ENCODE measurements at regions of chr12 and their contacts with region 1.

Region 1: DNA sequence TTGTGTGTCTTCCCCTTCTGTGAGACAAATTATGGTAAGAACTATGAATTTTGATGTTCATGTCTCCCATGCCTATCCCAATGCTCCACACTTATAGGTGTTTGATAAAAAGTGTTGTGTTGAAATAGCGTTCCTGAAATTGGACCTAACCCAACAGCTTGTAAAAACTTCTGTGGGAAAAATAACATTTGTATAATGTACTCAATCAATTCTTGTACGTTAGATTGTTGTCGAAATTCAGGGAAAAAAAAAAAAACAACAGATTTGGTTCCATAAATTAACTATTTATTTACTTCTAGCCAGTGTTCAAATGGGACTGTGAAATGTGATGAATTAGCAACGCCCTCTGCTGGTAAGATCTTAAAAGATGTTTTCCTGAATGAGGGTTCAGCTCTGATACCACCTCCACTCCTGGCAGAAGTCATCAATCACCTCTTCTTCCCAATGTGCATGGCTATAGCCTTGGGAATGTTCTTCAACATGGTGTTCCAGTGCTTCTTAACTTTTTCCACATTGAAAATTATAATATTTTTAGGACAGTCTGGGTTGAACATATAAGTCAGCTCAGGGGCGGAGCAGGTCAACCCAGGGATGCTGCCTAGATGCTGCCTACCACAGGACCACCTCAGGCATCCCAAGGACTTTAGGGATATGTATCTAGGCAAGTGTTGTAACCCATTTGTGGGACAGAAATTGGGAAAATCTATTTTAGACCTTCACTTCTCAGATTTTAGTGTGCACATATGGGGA is 170.6 kb downstream of the OTOGL start:
- DNase-seq: no peak
- ATAC-seq: peak; percentile 86
- H3K4me3 ChIP-seq: no peak overlapping the region
- H3K27ac ChIP-seq: no peak overlapping the region
- H3K4me1 ChIP-seq: no peaks in the 10 kb centered on the region
- H3K27me3 ChIP-seq: no peaks in the 10 kb centered on the region; a peak in 1 of 4 replicates
- CTCF ChIP-seq: peak; percentile 46 to 69 (median 63); a peak in 5 of 6 replicates
- EP300 ChIP-seq: no peak
- POLR2A ChIP-seq: no peak
- RAD21 ChIP-seq: peak; percentile 65

Region 2: DNA sequence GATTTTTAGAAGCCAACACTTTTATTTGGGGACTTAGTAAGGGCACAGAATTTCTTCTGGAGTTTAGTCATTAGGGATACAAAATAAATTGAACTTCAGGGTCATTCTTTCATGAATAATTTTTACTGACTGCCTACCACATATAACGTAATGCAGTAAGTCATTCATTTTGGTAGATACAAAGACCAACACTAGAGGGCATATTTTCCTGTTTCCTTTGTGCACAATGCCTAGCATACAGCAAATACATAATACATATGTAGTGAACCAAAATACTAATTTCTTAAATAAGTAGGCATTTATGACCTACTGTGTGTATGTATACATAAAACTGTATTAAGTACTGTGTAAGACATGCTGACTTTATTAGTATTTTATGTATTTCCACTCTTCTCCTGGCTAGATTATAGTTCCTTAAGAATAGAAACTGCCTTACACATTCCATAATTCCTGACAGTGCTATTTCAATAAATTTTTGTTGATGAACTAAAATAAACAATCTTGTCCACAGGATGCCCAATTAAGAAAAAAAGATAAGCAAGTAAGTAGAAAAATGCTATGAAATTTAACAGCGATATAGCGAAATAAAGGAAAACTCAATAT is 383.0 kb before region 1 on chr12:
- CTCF ChIA-PET with region 1: interaction called, 6 read pairs
- POLR2A ChIA-PET with region 1: no interaction called
- RAD21 ChIA-PET with region 1: no interaction called
- SMC1A ChIA-PET with region 1: no interaction called
- in situ Hi-C with region 1: no loop called
- intact Hi-C with region 1: loop called (anchors 2 kb)
- DNase-seq: peak; percentile 23
- ATAC-seq: peak; percentile 94
- H3K4me3 ChIP-seq: no peak overlapping the region
- H3K27ac ChIP-seq: no peak overlapping the region
- H3K4me1 ChIP-seq: no peaks in the 10 kb centered on the region
- H3K27me3 ChIP-seq: no peaks in the 10 kb centered on the region
- CTCF ChIP-seq: peak; percentile 49 to 57 (median 51); a peak in 5 of 6 replicates
- EP300 ChIP-seq: no peak
- POLR2A ChIP-seq: no peak
- RAD21 ChIP-seq: peak; percentile 41; the same call in 1 of the 2 replicates

Region 3: GRCh38 chr12:80195074-80195726 is 74.8 kb before region 1 on chr12:
- CTCF ChIA-PET with region 1: interaction called, 134 read pairs
- POLR2A ChIA-PET with region 1: no interaction called
- RAD21 ChIA-PET with region 1: interaction called, 26 read pairs
- SMC1A ChIA-PET with region 1: interaction called, 57 read pairs
- in situ Hi-C with region 1: no loop called
- intact Hi-C with region 1: loop called (anchors 1 kb)
- DNase-seq: no peak
- ATAC-seq: peak; percentile 87
- H3K4me3 ChIP-seq: no peak overlapping the region
- H3K27ac ChIP-seq: no peak overlapping the region
- H3K4me1 ChIP-seq: peaks cover 3% of the 10 kb centered on the region; the same call in 1 of the 2 replicates
- H3K27me3 ChIP-seq: no peaks in the 10 kb centered on the region; a peak in 1 of 4 replicates
- CTCF ChIP-seq: peak; percentile 35 to 61 (median 44); a peak in 4 of 6 replicates
- EP300 ChIP-seq: no peak
- POLR2A ChIP-seq: no peak
- RAD21 ChIP-seq: peak; percentile 55

Region 4: DNA sequence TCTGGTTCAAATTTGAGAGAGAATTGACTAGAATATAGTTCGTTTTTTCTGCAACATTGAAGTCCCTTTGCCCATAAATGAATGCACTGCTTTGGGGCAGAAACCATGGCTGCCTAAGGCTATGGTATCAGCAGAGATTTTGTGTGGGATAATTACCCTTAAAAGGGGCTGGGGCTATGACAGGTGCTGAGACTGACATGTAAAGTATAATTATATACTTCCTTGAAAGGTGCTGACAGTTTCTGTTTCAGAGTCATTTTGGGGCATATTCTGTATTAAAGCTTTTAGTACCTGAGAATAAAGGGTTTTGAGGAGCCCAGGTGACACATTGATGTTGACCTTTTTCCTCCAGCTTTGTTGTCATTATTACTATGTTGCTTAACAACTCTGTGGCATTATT is 23.8 kb after region 1 on chr12:
- CTCF ChIA-PET with region 1: interaction called, 13 read pairs
- POLR2A ChIA-PET with region 1: no interaction called
- RAD21 ChIA-PET with region 1: interaction called, 4 read pairs
- SMC1A ChIA-PET with region 1: interaction called, 10 read pairs
- in situ Hi-C with region 1: no loop called
- intact Hi-C with region 1: no loop called
- DNase-seq: peak; percentile 43
- ATAC-seq: peak; percentile 78
- H3K4me3 ChIP-seq: no peak overlapping the region
- H3K27ac ChIP-seq: peak overlapping the region; percentile 67
- H3K4me1 ChIP-seq: peaks cover 42% of the 10 kb centered on the region
- H3K27me3 ChIP-seq: no peaks in the 10 kb centered on the region
- CTCF ChIP-seq: no peak
- EP300 ChIP-seq: peak in 1 of 2 experiments; percentile 72; a peak in 1 of 4 replicates
- POLR2A ChIP-seq: no peak
- RAD21 ChIP-seq: no peak

Region 5: DNA sequence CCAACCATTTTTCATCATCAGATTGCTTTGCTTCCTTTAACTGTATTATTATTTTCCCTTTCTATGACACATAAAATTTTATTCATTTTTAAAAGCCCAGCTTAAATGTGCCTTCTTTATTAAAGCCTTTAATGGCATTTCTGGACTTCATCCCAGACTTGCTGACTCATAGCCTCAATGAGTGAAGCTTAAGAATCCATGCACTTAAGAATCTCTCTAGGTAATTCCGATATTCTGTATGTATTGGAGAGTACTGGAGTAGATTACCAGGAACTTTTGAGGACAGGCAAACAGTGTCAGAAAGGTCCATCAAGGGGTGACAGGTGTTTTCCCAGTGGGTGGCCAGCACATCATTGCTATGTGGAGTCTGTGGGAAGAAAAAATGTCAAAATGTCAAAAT is 281.9 kb after region 1 on chr12:
- CTCF ChIA-PET with region 1: no interaction called
- POLR2A ChIA-PET with region 1: no interaction called
- RAD21 ChIA-PET with region 1: no interaction called
- SMC1A ChIA-PET with region 1: no interaction called
- in situ Hi-C with region 1: no loop called
- intact Hi-C with region 1: no loop called
- DNase-seq: no peak
- ATAC-seq: no peak
- H3K4me3 ChIP-seq: no peak overlapping the region
- H3K27ac ChIP-seq: no peak overlapping the region
- H3K4me1 ChIP-seq: no peaks in the 10 kb centered on the region
- H3K27me3 ChIP-seq: no peaks in the 10 kb centered on the region
- CTCF ChIP-seq: no peak
- EP300 ChIP-seq: no peak
- POLR2A ChIP-seq: no peak
- RAD21 ChIP-seq: no peak